ENCODE measurements at regions of chr19 and their contacts with region 1.

Region 1: DNA sequence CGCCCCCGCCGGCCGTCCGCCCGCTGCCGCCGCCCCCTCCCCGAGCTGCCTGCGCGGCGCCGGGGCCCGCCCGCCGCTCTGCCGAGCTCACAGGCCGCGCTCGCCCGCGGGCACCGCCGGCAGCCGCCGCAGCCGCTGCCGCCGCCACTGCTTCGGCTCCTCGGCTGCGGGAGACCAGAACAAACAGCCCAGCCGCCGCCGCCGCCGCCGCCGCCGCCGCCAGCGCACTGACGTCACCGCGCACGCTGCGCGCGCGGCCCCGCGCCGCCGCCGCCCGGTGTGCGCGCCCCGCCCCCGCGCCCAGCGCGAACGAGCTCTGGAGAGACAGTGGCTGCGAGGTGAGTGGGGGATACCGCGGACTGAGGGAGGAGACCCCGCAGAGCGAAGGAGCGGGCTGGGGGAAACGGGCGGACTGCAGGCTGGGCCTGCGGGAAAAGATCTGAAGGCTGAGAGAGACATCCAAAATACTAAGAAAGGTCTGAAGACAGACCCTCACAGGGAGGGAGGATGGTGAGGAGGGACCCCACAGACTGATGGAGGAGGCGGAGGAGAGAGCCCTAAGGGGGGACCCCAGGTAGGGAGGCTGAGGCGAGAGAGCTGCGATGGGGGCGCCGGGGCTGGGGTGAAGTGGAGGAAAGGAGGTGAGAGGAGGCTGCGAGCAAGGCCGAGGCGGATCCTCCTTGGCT is at the start of gene BRD4:
- DNase-seq: peak; percentile 88
- CTCF ChIP-seq: no peak

Region 2: DNA sequence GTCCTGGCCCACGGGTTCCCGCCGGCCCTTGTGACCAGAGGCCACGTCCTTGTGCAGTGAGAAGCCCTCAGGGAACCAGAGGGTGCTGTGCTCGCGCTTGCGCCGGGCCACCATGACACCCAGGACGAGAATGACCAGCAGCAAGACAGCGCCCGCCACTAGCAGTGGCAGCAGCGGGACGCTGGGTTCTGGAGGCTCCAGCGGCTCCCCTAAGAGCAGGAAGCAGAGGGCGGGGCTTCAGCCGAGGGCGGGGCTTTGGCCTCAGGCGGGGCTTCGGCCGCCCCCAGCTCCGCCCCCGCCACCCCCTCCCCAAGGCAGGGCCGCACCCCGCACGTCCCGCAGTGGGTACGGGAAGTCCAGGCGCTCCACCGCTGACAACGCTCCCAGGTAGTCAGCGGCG is 162.1 kb before region 1 on chr19:
- CTCF ChIA-PET with region 1: no interaction called
- POLR2A ChIA-PET with region 1: no interaction called
- DNase-seq: no peak
- CTCF ChIP-seq: no peak

Region 3: GRCh38 chr19:15358918-15359317 is 26.5 kb after region 1 on chr19:
- CTCF ChIA-PET with region 1: interaction called, 4 read pairs
- POLR2A ChIA-PET with region 1: interaction called, 11 read pairs
- DNase-seq: no peak
- CTCF ChIP-seq: no peak

Region 4: GRCh38 chr19:15379083-15379995 is 46.9 kb after region 1 on chr19 and contains the start of gene AKAP8:
- CTCF ChIA-PET with region 1: no interaction called
- POLR2A ChIA-PET with region 1: interaction called, 22 read pairs
- DNase-seq: peak; percentile 99
- CTCF ChIP-seq: no peak

Region 5: GRCh38 chr19:15393963-15394362 is 61.5 kb after region 1 on chr19:
- CTCF ChIA-PET with region 1: no interaction called
- POLR2A ChIA-PET with region 1: no interaction called
- DNase-seq: no peak
- CTCF ChIP-seq: no peak

Measured in GM10248 (cell line).